Activated CD4-positive, alpha-beta memory T cell treated with anti-CD3 and anti-CD28 coated beads, Interleukin-2, amount 10 ng/mL, durations not matched to agents 7 days and 5 days (primary cell): ENCODE measurements at regions of chr17 and their contacts with region 1.

Region 1: DNA sequence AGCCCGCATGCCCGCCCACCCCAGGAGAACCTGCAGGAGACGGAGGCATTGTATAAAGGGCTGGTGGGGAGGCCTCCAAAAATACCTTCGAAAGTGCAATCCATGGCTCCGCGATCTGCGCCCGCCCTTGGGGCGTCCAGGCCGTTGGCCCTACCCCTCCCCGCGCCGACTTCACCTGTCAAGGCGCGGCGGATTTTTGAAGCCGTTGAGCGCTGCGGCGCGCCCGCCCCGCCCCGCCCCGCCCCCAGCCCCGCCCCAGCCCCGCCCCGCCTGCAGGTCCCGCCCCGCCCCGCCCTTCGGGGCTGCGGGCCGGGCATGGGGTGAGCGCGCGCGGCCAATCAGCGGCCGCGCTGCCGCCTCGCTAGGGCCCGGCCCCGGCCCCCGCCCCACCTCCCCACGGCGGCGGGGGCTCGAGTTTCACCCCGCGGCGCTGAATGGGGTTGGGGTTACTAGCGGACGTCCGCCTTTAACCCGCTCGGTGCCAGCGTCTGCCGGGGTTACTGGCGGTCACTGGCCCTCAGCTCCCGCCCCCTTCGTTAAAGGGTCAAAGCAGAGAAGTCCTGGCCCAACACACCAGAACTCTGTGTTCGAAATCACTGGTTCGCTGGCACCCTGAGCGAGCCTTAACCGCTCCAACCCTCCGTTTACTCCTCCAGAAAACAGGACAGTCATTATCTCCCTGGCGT is 13.2 kb downstream of the SREBF1 start:
- DNase-seq: peak; percentile 90
- H3K4me3 Mint-ChIP-seq: peak overlapping the region; percentile 76
- H3K27ac Mint-ChIP-seq: peak overlapping the region; percentile 95
- H3K4me1 Mint-ChIP-seq: peaks cover 93% of the 10 kb centered on the region
- H3K27me3 Mint-ChIP-seq: no peaks in the 10 kb centered on the region

Region 2: DNA sequence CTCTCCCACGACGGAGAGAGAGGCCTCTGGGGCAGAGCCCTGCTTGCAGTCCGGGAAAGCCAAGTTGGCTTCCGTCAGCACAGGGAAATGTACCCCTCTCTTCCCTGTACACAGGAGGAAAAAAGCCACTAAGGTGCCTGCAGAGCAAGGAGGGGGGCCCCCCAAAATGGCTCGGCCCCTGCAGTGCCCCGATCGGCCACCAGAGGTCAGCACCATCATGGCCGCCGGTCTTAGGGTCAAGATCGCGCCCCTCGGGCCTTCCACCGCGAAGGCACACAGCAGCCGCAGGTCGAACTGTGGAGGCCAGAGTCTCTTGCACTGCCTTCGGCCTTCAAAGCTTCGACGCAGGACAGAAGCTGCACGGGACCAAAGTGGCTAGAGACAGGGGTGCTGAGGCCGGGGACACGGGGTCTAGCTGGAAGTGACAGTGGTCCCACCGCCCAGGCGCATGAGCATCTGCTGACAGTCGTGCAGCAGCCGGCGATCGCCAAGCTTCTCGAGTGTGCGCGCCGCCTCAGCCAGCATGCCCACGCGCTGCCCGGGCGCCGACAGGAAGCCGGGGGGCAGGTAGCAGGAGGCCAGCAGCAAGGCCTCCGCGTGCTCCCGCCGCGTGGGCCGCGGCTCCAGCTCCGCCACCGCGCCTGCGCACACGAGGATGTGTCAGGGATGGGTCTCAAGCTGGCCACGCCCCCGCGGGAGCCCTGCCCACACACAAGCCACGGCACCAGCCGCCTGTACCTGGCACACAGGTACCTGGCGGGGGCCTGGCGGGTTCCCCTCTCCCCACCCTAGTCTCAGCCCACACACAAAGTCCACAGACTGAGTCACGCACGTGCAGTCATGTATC is 11.1 kb before region 1 on chr17:
- CTCF ChIA-PET with region 1: interaction called, 24 read pairs
- POLR2A ChIA-PET with region 1: interaction called, 13 read pairs
- DNase-seq: peak; percentile 59
- H3K4me3 Mint-ChIP-seq: no peak overlapping the region
- H3K27ac Mint-ChIP-seq: no peak overlapping the region
- H3K4me1 Mint-ChIP-seq: peaks cover 21% of the 10 kb centered on the region
- H3K27me3 Mint-ChIP-seq: no peaks in the 10 kb centered on the region

Region 3: GRCh38 chr17:17849845-17850373 is 26.3 kb after region 1 on chr17:
- CTCF ChIA-PET with region 1: interaction called, 11 read pairs
- POLR2A ChIA-PET with region 1: interaction called, 80 read pairs
- DNase-seq: peak; percentile 84
- H3K4me3 Mint-ChIP-seq: no peak overlapping the region
- H3K27ac Mint-ChIP-seq: peak overlapping the region; percentile 99
- H3K4me1 Mint-ChIP-seq: peaks cover 79% of the 10 kb centered on the region
- H3K27me3 Mint-ChIP-seq: no peaks in the 10 kb centered on the region

Region 4: DNA sequence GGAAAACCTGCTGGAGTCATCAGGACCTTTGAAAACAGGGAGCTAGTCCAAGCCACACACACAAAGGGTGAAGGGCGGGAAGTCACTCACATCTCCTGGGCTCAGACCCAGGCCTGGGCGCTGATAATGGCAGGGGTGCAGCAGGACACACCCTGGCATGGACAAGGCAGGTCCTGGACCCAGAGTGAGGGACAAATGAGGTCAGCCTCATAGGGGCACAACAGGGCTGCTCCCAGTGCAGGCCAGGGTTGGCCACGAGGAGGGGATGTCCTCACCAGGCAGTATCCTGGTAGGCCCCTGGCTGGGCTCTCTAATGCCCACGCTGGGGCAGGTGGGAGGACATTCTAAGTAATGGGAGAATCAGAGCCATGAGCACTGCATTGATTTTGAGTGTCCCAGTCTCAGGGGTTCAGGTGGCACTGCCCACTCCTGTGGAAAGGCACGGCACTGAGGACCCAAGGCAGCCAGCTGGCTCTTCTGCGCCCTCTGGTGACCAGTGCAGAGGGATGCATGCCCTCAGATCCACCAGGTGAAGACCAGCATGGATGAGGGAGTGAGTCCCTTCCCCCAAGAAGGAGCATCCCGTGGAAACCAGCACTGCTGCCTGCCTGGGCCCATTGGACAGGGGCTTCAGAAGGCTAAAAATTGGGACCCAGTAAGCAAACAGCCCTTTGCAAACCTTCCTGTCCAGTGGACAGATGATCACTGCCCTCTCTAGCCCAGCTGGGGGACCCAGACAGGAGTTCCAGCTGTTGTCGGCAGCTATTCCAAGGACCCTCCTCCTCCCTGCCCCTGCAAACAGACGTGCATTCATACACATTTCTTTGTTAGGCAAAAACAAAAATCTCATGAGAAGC is 36.6 kb after region 1 on chr17:
- CTCF ChIA-PET with region 1: interaction called, 4 read pairs
- POLR2A ChIA-PET with region 1: interaction called, 53 read pairs
- DNase-seq: peak; percentile 76
- H3K4me3 Mint-ChIP-seq: no peak overlapping the region
- H3K27ac Mint-ChIP-seq: no peak overlapping the region
- H3K4me1 Mint-ChIP-seq: peaks cover 34% of the 10 kb centered on the region
- H3K27me3 Mint-ChIP-seq: no peaks in the 10 kb centered on the region

Region 5: DNA sequence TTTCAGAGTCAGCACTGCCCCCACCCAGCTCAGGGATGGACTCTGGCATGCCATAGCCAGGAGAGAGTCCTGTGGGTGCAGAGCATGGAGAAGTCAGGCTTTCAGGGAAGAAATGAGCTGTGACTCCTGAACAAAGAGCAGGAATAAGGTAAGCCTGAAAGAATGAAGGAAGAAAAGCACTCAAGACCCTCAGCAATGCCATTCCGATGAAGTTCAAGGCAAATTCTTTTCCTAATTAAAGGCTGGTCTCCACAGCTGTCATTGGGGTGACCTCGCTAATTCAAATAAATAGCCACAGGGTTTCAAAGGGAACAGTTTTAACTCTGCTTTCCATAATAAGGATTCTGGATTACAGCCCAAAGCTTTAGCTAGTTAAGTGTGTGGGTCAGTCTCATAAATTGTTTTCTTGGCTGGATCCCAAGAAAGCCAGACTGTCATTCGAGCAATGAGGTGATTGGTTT is 116.9 kb after region 1 on chr17:
- CTCF ChIA-PET with region 1: no interaction called
- POLR2A ChIA-PET with region 1: no interaction called
- DNase-seq: no peak
- H3K4me3 Mint-ChIP-seq: no peak overlapping the region
- H3K27ac Mint-ChIP-seq: no peak overlapping the region
- H3K4me1 Mint-ChIP-seq: peaks cover 23% of the 10 kb centered on the region
- H3K27me3 Mint-ChIP-seq: no peaks in the 10 kb centered on the region